ENCODE measurements at regions of chr1 and their contacts with region 1.

Region 1: GRCh38 chr1:214261206-214262123 is 19.5 kb upstream of the SMYD2 start:
- DNase-seq: peak; percentile 86
- H3K4me3 ChIP-seq: no peak overlapping the region
- H3K27ac ChIP-seq: no peak overlapping the region
- H3K4me1 ChIP-seq: peaks cover 24% of the 10 kb centered on the region
- H3K27me3 ChIP-seq: peaks cover 0 to 4% of the 10 kb centered on the region in 2 experiments
- CTCF ChIP-seq: peak; percentile 96 to 97
- POLR2A ChIP-seq: no peak

Region 2: GRCh38 chr1:213374369-213374768 is 887.1 kb before region 1 on chr1:
- CTCF ChIA-PET with region 1: no interaction called
- POLR2A ChIA-PET with region 1: no interaction called
- dilution Hi-C with region 1: no loop called
- intact Hi-C with region 1: loop called (anchors 2 kb)
- DNase-seq: peak; percentile 61
- H3K4me3 ChIP-seq: no peak overlapping the region
- H3K27ac ChIP-seq: no peak overlapping the region
- H3K4me1 ChIP-seq: no peaks in the 10 kb centered on the region
- H3K27me3 ChIP-seq: no peaks in the 10 kb centered on the region
- CTCF ChIP-seq: peak; percentile 84 to 95
- POLR2A ChIP-seq: no peak

Region 3: GRCh38 chr1:214213136-214213535 is 48.3 kb before region 1 on chr1:
- CTCF ChIA-PET with region 1: interaction called, 37 read pairs
- POLR2A ChIA-PET with region 1: no interaction called
- dilution Hi-C with region 1: no loop called
- intact Hi-C with region 1: loop called (anchors 1 kb)
- DNase-seq: no peak
- H3K4me3 ChIP-seq: no peak overlapping the region
- H3K27ac ChIP-seq: no peak overlapping the region
- H3K4me1 ChIP-seq: peaks cover 7% of the 10 kb centered on the region
- H3K27me3 ChIP-seq: peaks cover 6 to 16% of the 10 kb centered on the region in 2 experiments
- CTCF ChIP-seq: no peak
- POLR2A ChIP-seq: no peak

Region 4: DNA sequence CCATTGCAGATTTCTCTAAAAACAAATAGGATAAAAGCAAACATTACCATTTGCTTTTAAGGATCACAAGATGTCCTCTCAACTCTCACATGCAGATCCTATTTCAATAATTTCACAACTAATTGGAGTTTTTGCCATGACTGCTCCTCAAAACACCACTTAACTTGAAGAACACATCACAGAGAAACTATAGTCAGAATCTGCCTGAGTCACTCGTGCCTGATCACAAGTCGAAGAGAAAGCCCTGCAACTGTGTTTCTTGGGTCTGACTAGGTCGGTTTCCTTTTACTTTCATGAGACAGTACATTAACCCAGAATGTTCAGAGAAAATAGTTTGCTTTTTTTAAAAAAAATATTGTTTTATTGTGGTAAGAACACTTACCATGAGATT is 26.8 kb before region 1 on chr1:
- CTCF ChIA-PET with region 1: no interaction called
- POLR2A ChIA-PET with region 1: no interaction called
- dilution Hi-C with region 1: no loop called
- intact Hi-C with region 1: loop called (anchors 2 kb)
- DNase-seq: no peak
- H3K4me3 ChIP-seq: no peak overlapping the region
- H3K27ac ChIP-seq: no peak overlapping the region
- H3K4me1 ChIP-seq: no peaks in the 10 kb centered on the region
- H3K27me3 ChIP-seq: peaks cover 4% of the 10 kb centered on the region in 2 experiments
- CTCF ChIP-seq: no peak
- POLR2A ChIP-seq: no peak

Region 5: DNA sequence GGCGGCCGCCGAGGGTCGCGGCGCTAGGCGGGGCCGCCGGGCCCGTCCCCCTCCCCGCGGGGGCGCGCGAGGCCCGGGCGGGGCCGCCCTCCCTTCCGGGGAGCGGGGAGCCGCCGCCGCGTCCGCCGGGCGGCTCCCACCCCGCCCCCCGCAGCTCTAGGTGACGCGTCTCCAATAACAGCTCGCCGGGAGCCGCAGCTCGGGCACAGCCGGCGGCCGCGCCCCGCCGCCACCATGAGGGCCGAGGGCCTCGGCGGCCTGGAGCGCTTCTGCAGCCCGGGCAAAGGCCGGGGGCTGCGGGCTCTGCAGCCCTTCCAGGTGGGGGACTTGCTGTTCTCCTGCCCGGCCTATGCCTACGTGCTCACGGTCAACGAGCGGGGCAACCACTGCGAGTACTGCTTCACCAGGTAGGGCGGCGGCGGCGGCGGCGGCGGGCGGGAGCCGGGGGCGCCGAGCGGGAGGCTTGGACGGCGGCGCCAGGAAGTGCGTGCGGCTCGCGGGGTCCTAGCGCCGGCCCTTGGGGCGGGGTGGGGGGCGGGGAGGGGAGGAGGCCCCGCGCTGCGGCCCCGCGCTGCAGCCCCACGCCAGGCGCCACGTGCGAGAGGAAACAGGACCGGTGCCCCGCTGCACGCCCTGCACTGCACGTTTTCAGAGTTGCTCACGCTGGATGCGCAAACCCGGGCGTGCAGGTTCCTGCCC is 19.7 kb after region 1 on chr1 and contains the start of gene SMYD2:
- CTCF ChIA-PET with region 1: interaction called, 17 read pairs
- POLR2A ChIA-PET with region 1: no interaction called
- dilution Hi-C with region 1: no loop called
- intact Hi-C with region 1: loop called (anchors 1 kb)
- DNase-seq: peak; percentile 56
- H3K4me3 ChIP-seq: peak within 1 kb of the TSS; percentile 66 to 79 (median 77)
- H3K27ac ChIP-seq: peak within 1 kb of the TSS; percentile 59
- H3K4me1 ChIP-seq: peaks cover 4% of the 10 kb centered on the region
- H3K27me3 ChIP-seq: no peaks in the 10 kb centered on the region
- CTCF ChIP-seq: no peak
- POLR2A ChIP-seq: peak; percentile 78
- total RNA-seq, gene SMYD2: 20.9 and 22.0 TPM in 2 replicates

Region 6: DNA sequence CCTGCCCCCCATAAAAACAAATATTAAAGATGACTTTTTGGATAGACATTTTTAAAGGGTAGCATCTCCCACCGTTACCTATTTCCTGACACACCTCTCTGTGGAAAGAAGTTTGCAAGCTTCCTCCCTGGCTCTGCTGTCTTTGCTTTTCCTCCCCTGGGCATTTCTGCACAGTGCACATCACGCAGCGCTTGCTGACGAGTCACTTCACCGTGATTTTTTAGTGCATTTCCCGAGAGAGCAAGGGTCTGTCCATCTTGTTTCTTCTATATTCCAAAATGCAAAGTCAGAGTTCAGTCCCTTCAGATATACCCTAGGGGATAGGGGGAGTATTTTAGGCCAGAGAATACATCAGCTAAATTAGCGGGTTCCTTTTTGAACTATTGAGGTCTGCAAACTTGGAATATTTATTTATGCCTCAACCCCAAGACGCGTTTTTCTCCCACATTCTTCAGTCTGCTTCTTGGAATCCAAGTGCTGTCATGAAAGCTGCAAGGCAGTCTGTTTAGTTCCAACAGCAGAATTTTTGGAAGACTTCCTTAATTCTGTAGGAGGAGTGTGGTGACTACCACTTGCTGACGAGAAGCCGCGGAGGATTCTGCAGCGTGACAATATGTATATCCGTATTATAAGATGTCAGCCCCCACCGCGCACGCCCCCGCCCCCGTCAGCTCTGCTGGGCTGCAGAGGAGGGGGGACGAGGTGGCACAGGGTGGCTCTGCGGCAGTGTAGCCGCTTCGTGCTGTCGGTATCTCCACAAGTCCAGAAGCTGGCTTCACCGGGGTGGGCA is 41.9 kb after region 1 on chr1:
- CTCF ChIA-PET with region 1: interaction called, 13 read pairs
- POLR2A ChIA-PET with region 1: no interaction called
- dilution Hi-C with region 1: no loop called
- intact Hi-C with region 1: no loop called
- DNase-seq: no peak
- H3K4me3 ChIP-seq: no peak overlapping the region
- H3K27ac ChIP-seq: no peak overlapping the region
- H3K4me1 ChIP-seq: no peaks in the 10 kb centered on the region
- H3K27me3 ChIP-seq: no peaks in the 10 kb centered on the region
- CTCF ChIP-seq: no peak
- POLR2A ChIP-seq: no peak

Region 7: GRCh38 chr1:214602764-214603657 is 341.5 kb after region 1 on chr1 and contains the start of gene CENPF:
- CTCF ChIA-PET with region 1: no interaction called
- POLR2A ChIA-PET with region 1: no interaction called
- dilution Hi-C with region 1: no loop called
- intact Hi-C with region 1: loop called (anchors 5 kb)
- DNase-seq: peak; percentile 99
- H3K4me3 ChIP-seq: peak within 1 kb of the TSS; percentile 80 to 93 (median 80)
- H3K27ac ChIP-seq: peak within 1 kb of the TSS; percentile 56
- H3K4me1 ChIP-seq: peaks cover 11% of the 10 kb centered on the region
- H3K27me3 ChIP-seq: no peaks in the 10 kb centered on the region
- CTCF ChIP-seq: peak in 1 of 2 donors; percentile 30
- POLR2A ChIP-seq: peak; percentile 59
- total RNA-seq, gene CENPF: 66.2 and 72.9 TPM in 2 replicates